Activated CD8-positive, alpha-beta T cell treated with anti-CD3 and anti-CD28 coated beads for 36 hours (primary cell): ENCODE measurements at regions of chr13 and their contacts with region 1.

Region 1: GRCh38 chr13:78978381-78978998 is 319.5 kb upstream of the OBI1 start:
- DNase-seq: peak; percentile 55
- ATAC-seq: peak; percentile 76
- H3K4me3 Mint-ChIP-seq: no peak overlapping the region
- H3K27ac Mint-ChIP-seq: no peak overlapping the region
- H3K4me1 Mint-ChIP-seq: no peaks in the 10 kb centered on the region
- H3K27me3 Mint-ChIP-seq: peaks cover 4% of the 10 kb centered on the region
- CTCF ChIP-seq: peak; percentile 74

Region 2: GRCh38 chr13:78241278-78241919 is 737.1 kb before region 1 on chr13:
- CTCF ChIA-PET with region 1: interaction called, 24 read pairs
- POLR2A ChIA-PET with region 1: no interaction called
- intact Hi-C with region 1: loop called (anchors 5 kb)
- DNase-seq: peak; percentile 45
- ATAC-seq: no peak
- H3K4me3 Mint-ChIP-seq: no peak overlapping the region
- H3K27ac Mint-ChIP-seq: no peak overlapping the region
- H3K4me1 Mint-ChIP-seq: no peaks in the 10 kb centered on the region
- H3K27me3 Mint-ChIP-seq: no peaks in the 10 kb centered on the region
- CTCF ChIP-seq: peak; percentile 66